SK-N-SH (cell line): ENCODE measurements at regions of chrX and their contacts with region 1.

Region 1: GRCh38 chrX:19334945-19335626 is 8.6 kb upstream of the PDHA1 start:
- DNase-seq: no peak
- H3K4me3 ChIP-seq: no peak overlapping the region; a peak in 1 of 4 replicates
- H3K27ac ChIP-seq: no peak overlapping the region
- H3K4me1 ChIP-seq: peaks cover 0 to 6% of the 10 kb centered on the region in 2 experiments; a peak in 2 of 4 replicates
- H3K27me3 ChIP-seq: peaks cover 16% of the 10 kb centered on the region; the same call in 1 of the 2 replicates
- CTCF ChIP-seq: peak; percentile 46
- EP300 ChIP-seq: no peak
- RAD21 ChIP-seq: peak; percentile 37

Region 2: DNA sequence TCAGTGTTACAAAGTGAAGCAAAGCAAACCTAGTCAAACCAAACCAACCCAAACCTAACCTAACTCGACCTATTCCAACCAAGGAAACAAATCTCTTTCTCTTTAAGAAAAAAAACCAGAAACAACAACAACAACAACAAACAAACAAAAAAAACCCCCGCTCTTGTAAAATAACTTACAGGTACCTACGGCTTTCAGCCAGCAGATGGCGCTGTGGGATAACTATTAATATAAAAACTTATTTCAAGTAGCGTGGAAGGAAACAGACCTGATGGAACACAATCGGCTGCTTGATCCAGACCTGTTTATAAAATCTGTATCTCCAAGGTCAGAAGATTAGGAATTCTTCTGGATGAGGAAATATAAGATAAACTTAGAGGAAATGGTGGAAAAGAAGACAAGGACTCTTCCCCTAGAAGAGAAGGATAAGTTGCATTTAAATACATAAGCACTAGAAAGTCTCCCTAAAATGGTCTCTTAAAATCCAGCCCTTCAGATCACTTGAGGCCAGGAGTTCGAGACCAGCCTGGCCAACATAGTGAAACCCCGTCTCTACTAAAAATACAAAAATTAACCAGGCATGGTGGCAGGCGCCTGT is 944.0 kb before region 1 on chrX:
- CTCF ChIA-PET with region 1: interaction called, 25 read pairs
- POLR2A ChIA-PET with region 1: no interaction called
- DNase-seq: peak; percentile 69
- H3K4me3 ChIP-seq: no peak overlapping the region; a peak in 1 of 4 replicates
- H3K27ac ChIP-seq: no peak overlapping the region
- H3K4me1 ChIP-seq: no peaks in the 10 kb centered on the region
- H3K27me3 ChIP-seq: no peaks in the 10 kb centered on the region
- CTCF ChIP-seq: peak; percentile 88
- EP300 ChIP-seq: no peak
- RAD21 ChIP-seq: peak; percentile 87

Region 3: GRCh38 chrX:18410043-18410442 is 925.0 kb before region 1 on chrX:
- CTCF ChIA-PET with region 1: interaction called, 14 read pairs
- POLR2A ChIA-PET with region 1: no interaction called
- DNase-seq: peak; percentile 48
- H3K4me3 ChIP-seq: no peak overlapping the region
- H3K27ac ChIP-seq: no peak overlapping the region
- H3K4me1 ChIP-seq: no peaks in the 10 kb centered on the region; a peak in 1 of 4 replicates
- H3K27me3 ChIP-seq: no peaks in the 10 kb centered on the region
- CTCF ChIP-seq: peak; percentile 55
- EP300 ChIP-seq: no peak
- RAD21 ChIP-seq: peak; percentile 88

Region 4: DNA sequence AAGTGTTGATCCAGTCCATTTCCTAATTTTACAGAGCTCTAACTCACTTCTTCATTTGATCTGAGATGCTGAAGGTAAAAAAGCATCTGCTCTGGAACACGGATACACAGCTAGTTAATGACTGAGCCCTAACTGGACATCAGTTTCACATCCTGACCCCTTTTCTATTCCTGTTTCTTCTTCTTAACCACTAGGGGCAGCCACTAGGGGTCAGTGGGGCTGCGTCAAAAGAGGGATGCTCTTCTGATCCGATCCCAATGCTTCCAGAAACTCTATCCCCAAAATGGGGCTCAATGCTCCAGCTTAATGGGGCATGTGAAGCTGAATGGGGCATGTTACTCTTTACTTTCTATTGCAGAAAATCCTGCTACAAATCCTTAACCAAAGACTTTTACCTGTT is 317.8 kb before region 1 on chrX:
- CTCF ChIA-PET with region 1: interaction called, 27 read pairs
- POLR2A ChIA-PET with region 1: no interaction called
- DNase-seq: peak; percentile 73
- H3K4me3 ChIP-seq: no peak overlapping the region
- H3K27ac ChIP-seq: no peak overlapping the region
- H3K4me1 ChIP-seq: no peaks in the 10 kb centered on the region
- H3K27me3 ChIP-seq: no peaks in the 10 kb centered on the region
- CTCF ChIP-seq: peak; percentile 69
- EP300 ChIP-seq: no peak
- RAD21 ChIP-seq: peak; percentile 78

Region 5: GRCh38 chrX:19030805-19031204 is 304.3 kb before region 1 on chrX:
- CTCF ChIA-PET with region 1: interaction called, 12 read pairs
- POLR2A ChIA-PET with region 1: no interaction called
- DNase-seq: no peak
- H3K4me3 ChIP-seq: no peak overlapping the region
- H3K27ac ChIP-seq: no peak overlapping the region
- H3K4me1 ChIP-seq: no peaks in the 10 kb centered on the region
- H3K27me3 ChIP-seq: no peaks in the 10 kb centered on the region
- CTCF ChIP-seq: no peak
- EP300 ChIP-seq: no peak
- RAD21 ChIP-seq: no peak